Uterus (tissue), 4 donors: ENCODE measurements at regions of chr7 and their contacts with region 1.

Region 1: GRCh38 chr7:47254081-47255006 is 327.6 kb downstream of the TNS3 start:
- DNase-seq: peak; percentile 83 to 84
- H3K4me3 ChIP-seq: peak overlapping the region; percentile 38 to 39
- H3K27ac ChIP-seq: peak overlapping the region; percentile 92
- H3K4me1 ChIP-seq: peaks cover 4 to 8% of the 10 kb centered on the region in 2 donors
- H3K27me3 ChIP-seq: no peaks in the 10 kb centered on the region
- CTCF ChIP-seq: peak; percentile 82 to 99 (median 97)
- POLR2A ChIP-seq: peak in 1 of 2 donors; percentile 52

Region 2: DNA sequence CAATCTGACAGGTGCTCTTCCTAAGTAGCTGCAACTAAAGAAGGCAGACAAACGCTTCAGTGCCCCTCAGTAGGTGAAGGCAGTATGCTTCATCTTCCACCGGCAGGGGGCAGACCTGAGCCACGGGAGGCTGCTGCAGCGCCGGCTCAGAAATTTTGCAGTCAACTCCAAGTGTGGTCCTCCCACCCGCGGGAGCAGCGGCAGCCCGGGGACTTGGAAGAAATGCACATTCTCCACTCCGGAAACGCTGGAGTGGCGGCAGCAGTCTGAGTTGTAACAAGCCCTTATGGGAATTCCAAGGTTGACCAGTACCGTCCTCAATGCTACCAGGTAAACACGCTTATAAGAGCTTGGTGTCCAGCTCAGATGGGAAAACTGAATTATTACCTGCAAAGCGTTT is 1336.7 kb before region 1 on chr7:
- intact Hi-C with region 1: loop called (anchors 10 kb)
- DNase-seq: peak; percentile 87 to 88
- H3K4me3 ChIP-seq: peak overlapping the region in 1 of 2 donors; percentile 76
- H3K27ac ChIP-seq: peak overlapping the region; percentile 40 to 89
- H3K4me1 ChIP-seq: peaks cover 0 to 4% of the 10 kb centered on the region in 2 donors
- H3K27me3 ChIP-seq: no peaks in the 10 kb centered on the region
- CTCF ChIP-seq: peak; percentile 84 to 95 (median 92)
- POLR2A ChIP-seq: no peak

Region 3: GRCh38 chr7:47088329-47089067 is 165.8 kb before region 1 on chr7:
- intact Hi-C with region 1: loop called (anchors 10 kb)
- DNase-seq: peak; percentile 60 to 66
- H3K4me3 ChIP-seq: no peak overlapping the region
- H3K27ac ChIP-seq: no peak overlapping the region
- H3K4me1 ChIP-seq: no peaks in the 10 kb centered on the region
- H3K27me3 ChIP-seq: no peaks in the 10 kb centered on the region
- CTCF ChIP-seq: peak; percentile 79 to 84 (median 82)
- POLR2A ChIP-seq: no peak